ENCODE measurements at regions of chr11 and their contacts with region 1.

Region 1: GRCh38 chr11:111422494-111423249 is 43.6 kb upstream of the POU2AF1 start:
- DNase-seq: peak; percentile 63
- CTCF ChIP-seq: peak; percentile 95

Region 2: DNA sequence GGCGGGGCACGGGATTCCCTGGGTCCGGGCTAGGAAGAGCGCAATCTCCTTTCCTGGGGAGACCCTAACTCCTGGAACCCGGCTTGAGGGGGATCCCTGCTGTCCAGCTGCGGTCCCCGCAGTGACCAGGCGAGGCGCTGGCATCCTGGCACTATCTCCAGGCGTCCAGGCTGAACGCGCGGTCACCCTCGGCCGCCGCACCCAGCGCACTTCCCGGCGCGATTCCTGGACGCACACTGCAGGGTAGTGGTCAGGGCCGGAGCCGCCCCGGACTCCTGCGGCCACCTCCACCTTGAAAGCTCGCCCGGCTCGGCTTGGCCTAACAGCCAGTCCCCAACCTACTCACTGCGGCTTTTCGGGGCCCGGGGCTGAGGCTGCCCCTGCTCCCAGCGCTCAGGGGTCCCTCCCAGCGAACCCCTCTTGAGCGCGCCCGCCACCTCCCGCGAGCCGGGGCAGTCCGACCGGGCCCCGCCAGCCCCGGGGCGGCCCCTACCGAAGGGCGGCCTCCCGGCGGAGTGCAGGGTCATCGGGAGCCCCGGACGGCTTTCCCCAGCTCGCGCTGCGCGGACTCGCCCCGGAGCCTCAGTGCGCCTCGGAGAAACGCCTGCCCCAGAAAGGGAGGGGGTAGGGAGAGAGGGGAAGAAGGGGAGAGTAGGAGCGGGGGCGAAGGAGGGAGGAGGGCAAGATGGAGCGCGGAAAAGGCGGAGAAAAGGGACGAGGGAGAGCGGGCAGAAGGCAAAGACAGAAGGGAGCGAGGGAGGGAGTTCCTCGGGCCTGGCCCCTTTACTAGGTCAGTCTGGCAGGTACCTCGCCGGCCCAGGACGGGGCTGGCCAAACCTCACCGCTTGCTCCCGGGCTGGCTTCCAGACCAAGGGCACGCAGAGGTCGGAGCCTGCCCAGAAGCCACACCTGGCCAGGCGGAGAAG is 123.3 kb before region 1 on chr11:
- CTCF ChIA-PET with region 1: interaction called, 39 read pairs
- POLR2A ChIA-PET with region 1: no interaction called
- DNase-seq: peak; percentile 63
- CTCF ChIP-seq: peak; percentile 54

Region 3: GRCh38 chr11:111367411-111368284 is 55.0 kb before region 1 on chr11:
- CTCF ChIA-PET with region 1: interaction called, 636 read pairs
- POLR2A ChIA-PET with region 1: interaction called, 27 read pairs
- DNase-seq: peak; percentile 72
- CTCF ChIP-seq: no peak

Region 4: DNA sequence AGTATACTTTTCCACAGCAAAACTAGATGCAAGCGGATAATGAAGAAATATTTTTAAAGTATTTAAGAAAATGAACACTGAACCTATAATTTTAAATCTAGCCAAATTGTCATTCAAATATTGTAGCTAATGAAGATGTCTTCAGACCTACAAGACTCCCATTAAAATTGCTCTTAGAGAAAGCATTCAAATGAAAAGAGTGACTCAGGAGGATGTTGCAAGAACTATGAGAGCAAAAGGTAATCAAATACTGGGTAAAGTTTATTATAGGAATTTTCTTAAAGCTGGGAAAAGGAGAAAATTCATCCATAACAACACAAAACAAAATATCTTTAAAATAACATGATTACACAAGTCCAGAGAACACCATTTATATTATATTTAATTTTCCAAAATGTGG is 38.2 kb before region 1 on chr11:
- CTCF ChIA-PET with region 1: interaction called, 636 read pairs
- POLR2A ChIA-PET with region 1: interaction called, 21 read pairs
- DNase-seq: no peak
- CTCF ChIP-seq: no peak

Region 5: GRCh38 chr11:111399187-111400031 is 23.3 kb before region 1 on chr11:
- CTCF ChIA-PET with region 1: interaction called, 39 read pairs
- POLR2A ChIA-PET with region 1: no interaction called
- DNase-seq: no peak
- CTCF ChIP-seq: peak; percentile 44

Region 6: DNA sequence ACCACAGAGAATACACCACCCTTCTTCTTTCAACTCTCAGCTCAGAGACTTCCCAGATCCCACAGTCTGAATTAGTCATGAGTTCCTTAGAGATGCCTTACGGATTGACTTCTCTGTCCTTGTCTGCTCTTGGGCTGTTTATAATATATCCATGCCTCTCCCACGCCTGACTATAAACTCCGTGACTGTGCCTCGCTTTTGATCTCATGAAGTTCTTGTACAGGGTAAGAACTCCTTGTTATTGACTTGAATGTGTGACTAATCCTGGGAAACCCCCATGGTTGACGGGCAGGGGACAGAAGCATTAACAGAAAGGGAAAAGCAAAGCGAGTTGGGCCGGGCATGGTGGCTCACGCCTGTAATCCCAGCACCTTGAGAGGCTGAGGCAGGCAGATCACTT is 18.8 kb after region 1 on chr11:
- CTCF ChIA-PET with region 1: interaction called, 75 read pairs
- POLR2A ChIA-PET with region 1: no interaction called
- DNase-seq: no peak
- CTCF ChIP-seq: no peak